ENCODE measurements at regions of chr17 and their contacts with region 1.

Region 1: GRCh38 chr17:77429919-77430752 is 289.4 kb downstream of the SEC14L1 start:
- DNase-seq: peak; percentile 92 to 95 (median 94)
- ATAC-seq: peak; percentile 81 to 92 (median 84)
- H3K4me3 ChIP-seq: no peak overlapping the region
- H3K27ac ChIP-seq: peak overlapping the region; percentile 58 to 97 (median 76)
- H3K4me1 ChIP-seq: peaks cover 23 to 98% (median 86%) of the 10 kb centered on the region in 12 donors
- H3K27me3 ChIP-seq: no peaks in the 10 kb centered on the region
- CTCF ChIP-seq: peak; percentile 73 to 95 (median 86)
- POLR2A ChIP-seq: peak in 1 of 2 donors; percentile 14

Region 2: GRCh38 chr17:77124192-77124889 is 305.8 kb before region 1 on chr17:
- intact Hi-C with region 1: no loop called
- DNase-seq: peak in 4 of 5 donors; percentile 32 to 65 (median 60)
- ATAC-seq: peak; percentile 45 to 77 (median 56)
- H3K4me3 ChIP-seq: no peak overlapping the region
- H3K27ac ChIP-seq: peak overlapping the region; percentile 75 to 96 (median 87)
- H3K4me1 ChIP-seq: peaks cover 0 to 86% (median 52%) of the 10 kb centered on the region in 12 donors
- H3K27me3 ChIP-seq: no peaks in the 10 kb centered on the region
- CTCF ChIP-seq: no peak
- POLR2A ChIP-seq: no peak

Region 3: DNA sequence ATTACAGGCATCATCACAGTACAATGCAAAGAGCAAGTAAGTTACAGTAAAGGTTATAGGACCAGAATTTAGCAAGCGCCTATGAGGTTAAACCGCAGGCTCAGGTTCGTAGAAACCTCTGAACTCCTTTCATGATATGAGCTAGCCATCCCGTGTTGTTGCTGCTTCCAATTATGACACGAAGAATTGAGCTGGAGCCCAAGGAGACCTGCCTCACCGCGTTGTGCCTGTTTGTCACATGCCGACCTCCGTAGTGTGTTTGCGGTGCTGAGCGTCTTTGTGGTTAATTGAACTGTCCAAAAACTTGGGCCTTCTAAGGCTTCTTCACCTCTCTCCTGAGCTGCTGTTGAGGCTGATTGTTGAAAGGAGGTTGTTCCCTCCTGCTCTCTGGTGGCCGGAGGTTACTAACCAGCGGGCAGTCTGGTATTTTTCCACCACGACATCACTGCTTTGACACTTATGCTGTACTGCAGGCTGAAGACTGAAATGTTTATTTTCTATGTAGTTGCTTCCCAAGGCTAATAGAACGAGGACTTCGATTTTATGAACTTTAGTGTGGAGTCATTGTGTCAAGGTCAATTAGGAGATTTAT is 221.8 kb before region 1 on chr17:
- intact Hi-C with region 1: no loop called
- DNase-seq: peak in 4 of 5 donors; percentile 56 to 63 (median 58)
- ATAC-seq: peak; percentile 34 to 82 (median 72)
- H3K4me3 ChIP-seq: no peak overlapping the region
- H3K27ac ChIP-seq: peak overlapping the region; percentile 21 to 72 (median 55)
- H3K4me1 ChIP-seq: peaks cover 4 to 70% (median 35%) of the 10 kb centered on the region in 12 donors
- H3K27me3 ChIP-seq: no peaks in the 10 kb centered on the region
- CTCF ChIP-seq: peak in 10 of 12 donors; percentile 17 to 60 (median 35)
- POLR2A ChIP-seq: no peak

Region 4: DNA sequence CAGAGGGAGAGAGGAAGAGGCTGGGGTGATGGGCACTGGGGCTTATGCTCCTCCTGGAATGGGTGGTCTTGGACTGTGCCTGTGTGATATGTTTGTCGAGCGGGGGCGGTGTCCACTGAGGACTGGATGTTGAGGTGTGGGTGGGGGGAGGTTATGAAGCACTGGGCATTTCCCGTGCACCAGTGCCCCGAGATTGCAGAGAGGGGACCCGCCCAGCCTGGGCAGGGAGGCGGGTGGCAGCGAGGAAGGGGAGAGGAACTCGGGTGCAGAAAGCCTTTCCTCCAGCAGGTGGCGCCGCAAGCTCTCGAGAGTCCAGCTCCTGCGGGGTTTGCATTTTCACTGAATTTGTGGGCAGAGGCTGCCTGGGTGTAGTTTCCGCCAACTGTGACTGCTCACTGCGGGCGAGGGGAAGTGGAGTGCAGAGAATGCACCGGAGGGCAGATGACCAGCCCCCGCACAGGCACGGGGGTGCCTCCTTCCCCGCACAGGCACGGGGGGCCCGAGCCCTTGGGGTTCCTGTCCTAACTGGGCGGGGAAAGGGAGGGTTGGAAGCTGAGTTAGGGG is 98.8 kb before region 1 on chr17:
- intact Hi-C with region 1: loop called (anchors 2 to 5 kb)
- DNase-seq: peak; percentile 91 to 96 (median 92)
- ATAC-seq: peak; percentile 74 to 92 (median 88)
- H3K4me3 ChIP-seq: peak overlapping the region in 7 of 12 donors; percentile 21 to 45 (median 41)
- H3K27ac ChIP-seq: peak overlapping the region in 9 of 12 donors; percentile 2 to 85 (median 55)
- H3K4me1 ChIP-seq: peaks cover 0 to 31% (median 9%) of the 10 kb centered on the region in 12 donors
- H3K27me3 ChIP-seq: no peaks in the 10 kb centered on the region
- CTCF ChIP-seq: peak; percentile 93 to 98 (median 94)
- POLR2A ChIP-seq: no peak

Region 5: GRCh38 chr17:77471984-77472461 is 41.9 kb after region 1 on chr17:
- intact Hi-C with region 1: loop called in 7 of 10 experiments (anchors 5 kb)
- DNase-seq: peak in 1 of 5 donors; percentile 53
- ATAC-seq: peak; percentile 33 to 69 (median 64)
- H3K4me3 ChIP-seq: peak overlapping the region in 4 of 12 donors; percentile 4 to 15 (median 10)
- H3K27ac ChIP-seq: peak overlapping the region; percentile 62 to 88 (median 80)
- H3K4me1 ChIP-seq: peaks cover 26 to 98% (median 79%) of the 10 kb centered on the region in 12 donors
- H3K27me3 ChIP-seq: no peaks in the 10 kb centered on the region
- CTCF ChIP-seq: no peak
- POLR2A ChIP-seq: no peak

Region 6: GRCh38 chr17:77476931-77477877 is 47.1 kb after region 1 on chr17:
- intact Hi-C with region 1: loop called in 7 of 10 experiments (anchors 5 kb)
- DNase-seq: peak; percentile 60 to 85 (median 73)
- ATAC-seq: peak; percentile 68 to 86 (median 84)
- H3K4me3 ChIP-seq: peak overlapping the region in 2 of 12 donors; percentile 13 to 19
- H3K27ac ChIP-seq: peak overlapping the region in 11 of 12 donors; percentile 6 to 88 (median 67)
- H3K4me1 ChIP-seq: peaks cover 11 to 82% (median 67%) of the 10 kb centered on the region in 12 donors
- H3K27me3 ChIP-seq: no peaks in the 10 kb centered on the region
- CTCF ChIP-seq: no peak
- POLR2A ChIP-seq: no peak

Region 7: DNA sequence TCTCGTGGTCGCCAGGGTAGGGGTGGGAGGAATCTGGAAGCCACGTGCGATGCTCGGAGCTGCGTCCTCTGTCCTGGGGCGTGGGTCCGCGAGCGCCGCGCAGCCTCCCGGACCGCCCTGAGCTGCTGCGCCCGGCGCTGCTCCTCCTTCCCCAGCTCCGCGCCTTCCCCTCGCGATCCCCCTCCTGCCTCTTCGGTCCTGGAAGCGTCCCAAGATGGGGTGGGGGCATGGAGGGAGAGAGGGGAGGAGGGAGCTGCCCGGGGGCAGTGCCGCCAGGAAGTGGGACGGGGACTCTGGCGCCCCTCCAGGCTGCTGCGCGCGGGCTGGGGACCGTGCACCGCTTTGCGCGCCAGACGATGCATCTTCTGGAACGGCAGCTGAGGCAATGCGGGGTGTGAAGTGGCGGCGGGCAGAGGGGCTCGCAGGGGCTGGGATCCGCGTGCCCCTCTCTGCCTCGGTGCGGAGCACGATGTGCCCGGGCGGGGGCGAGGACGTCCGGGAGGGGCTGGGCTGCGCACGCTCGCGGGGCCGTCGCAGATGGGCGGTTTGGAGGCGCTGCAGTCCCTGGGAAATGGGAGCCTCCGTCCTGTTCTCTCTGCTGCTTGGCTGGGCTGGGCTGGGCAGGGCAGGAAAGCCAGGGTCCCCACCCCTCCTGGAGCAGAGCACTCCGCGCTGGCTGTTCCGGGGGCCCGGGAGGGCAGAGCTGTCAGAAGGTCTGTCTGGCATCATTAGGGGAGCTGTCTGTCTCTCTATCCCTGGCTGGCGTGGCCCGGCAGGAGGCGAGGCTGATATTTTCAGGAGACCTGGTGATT is 98.6 kb after region 1 on chr17:
- intact Hi-C with region 1: no loop called
- DNase-seq: peak in 1 of 5 donors; percentile 34
- ATAC-seq: peak in 3 of 4 donors; percentile 19 to 40 (median 38)
- H3K4me3 ChIP-seq: peak overlapping the region in 11 of 12 donors; percentile 15 to 56 (median 40)
- H3K27ac ChIP-seq: no peak overlapping the region
- H3K4me1 ChIP-seq: peaks cover 0 to 13% (median 4%) of the 10 kb centered on the region in 12 donors
- H3K27me3 ChIP-seq: peaks cover 0 to 23% (median 6%) of the 10 kb centered on the region in 9 donors
- CTCF ChIP-seq: peak in 2 of 12 donors; percentile 14 to 20
- POLR2A ChIP-seq: no peak